ENCODE measurements at regions of chr3 and their contacts with region 1.

Region 1: GRCh38 chr3:32467333-32468070 is 35.1 kb downstream of the CMTM6 start:
- DNase-seq: no peak
- H3K4me3 ChIP-seq: no peak overlapping the region
- H3K27ac ChIP-seq: no peak overlapping the region
- H3K27me3 ChIP-seq: no peaks in the 10 kb centered on the region
- CTCF ChIP-seq: peak; percentile 96

Region 2: DNA sequence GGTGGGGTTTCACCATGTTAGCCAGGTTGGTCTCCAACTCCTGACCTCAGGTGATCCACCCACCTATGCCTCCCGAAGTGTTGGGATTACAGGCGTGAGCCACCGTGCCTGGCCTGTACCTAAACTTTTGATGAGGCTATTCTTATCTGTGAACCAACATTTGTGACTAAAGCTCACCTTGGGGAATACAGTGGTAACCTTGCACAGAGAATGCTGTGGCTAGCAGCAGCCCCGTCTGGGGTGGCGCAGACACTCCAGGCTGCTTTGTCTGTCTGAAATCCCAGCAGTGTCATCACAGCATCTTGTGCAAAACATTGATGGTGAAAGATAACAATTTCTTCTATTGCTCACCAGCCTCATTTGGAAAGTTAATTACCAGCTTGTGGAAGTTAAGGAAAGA is 170.1 kb before region 1 on chr3:
- CTCF ChIA-PET with region 1: interaction called, 13 read pairs
- POLR2A ChIA-PET with region 1: no interaction called
- DNase-seq: no peak
- H3K4me3 ChIP-seq: no peak overlapping the region
- H3K27ac ChIP-seq: no peak overlapping the region
- H3K27me3 ChIP-seq: peaks cover 5% of the 10 kb centered on the region
- CTCF ChIP-seq: no peak

Region 3: GRCh38 chr3:32406486-32407408 is 60.8 kb before region 1 on chr3:
- CTCF ChIA-PET with region 1: interaction called, 12 read pairs
- POLR2A ChIA-PET with region 1: no interaction called
- DNase-seq: no peak
- H3K4me3 ChIP-seq: no peak overlapping the region
- H3K27ac ChIP-seq: no peak overlapping the region
- H3K27me3 ChIP-seq: no peaks in the 10 kb centered on the region
- CTCF ChIP-seq: no peak

Region 4: GRCh38 chr3:32420126-32421038 is 47.1 kb before region 1 on chr3:
- CTCF ChIA-PET with region 1: interaction called, 24 read pairs
- POLR2A ChIA-PET with region 1: no interaction called
- DNase-seq: no peak
- H3K4me3 ChIP-seq: no peak overlapping the region
- H3K27ac ChIP-seq: peak overlapping the region; percentile 32
- H3K27me3 ChIP-seq: no peaks in the 10 kb centered on the region
- CTCF ChIP-seq: peak; percentile 20; the same call in 1 of the 2 replicates

Region 5: GRCh38 chr3:32484436-32484835 is 16.9 kb after region 1 on chr3:
- CTCF ChIA-PET with region 1: interaction called, 30 read pairs
- POLR2A ChIA-PET with region 1: no interaction called
- DNase-seq: no peak
- H3K4me3 ChIP-seq: no peak overlapping the region
- H3K27ac ChIP-seq: no peak overlapping the region
- H3K27me3 ChIP-seq: no peaks in the 10 kb centered on the region
- CTCF ChIP-seq: no peak

Measured in AG04450 (cell line).